ENCODE measurements at regions of chr11 and their contacts with region 1.

Region 1: DNA sequence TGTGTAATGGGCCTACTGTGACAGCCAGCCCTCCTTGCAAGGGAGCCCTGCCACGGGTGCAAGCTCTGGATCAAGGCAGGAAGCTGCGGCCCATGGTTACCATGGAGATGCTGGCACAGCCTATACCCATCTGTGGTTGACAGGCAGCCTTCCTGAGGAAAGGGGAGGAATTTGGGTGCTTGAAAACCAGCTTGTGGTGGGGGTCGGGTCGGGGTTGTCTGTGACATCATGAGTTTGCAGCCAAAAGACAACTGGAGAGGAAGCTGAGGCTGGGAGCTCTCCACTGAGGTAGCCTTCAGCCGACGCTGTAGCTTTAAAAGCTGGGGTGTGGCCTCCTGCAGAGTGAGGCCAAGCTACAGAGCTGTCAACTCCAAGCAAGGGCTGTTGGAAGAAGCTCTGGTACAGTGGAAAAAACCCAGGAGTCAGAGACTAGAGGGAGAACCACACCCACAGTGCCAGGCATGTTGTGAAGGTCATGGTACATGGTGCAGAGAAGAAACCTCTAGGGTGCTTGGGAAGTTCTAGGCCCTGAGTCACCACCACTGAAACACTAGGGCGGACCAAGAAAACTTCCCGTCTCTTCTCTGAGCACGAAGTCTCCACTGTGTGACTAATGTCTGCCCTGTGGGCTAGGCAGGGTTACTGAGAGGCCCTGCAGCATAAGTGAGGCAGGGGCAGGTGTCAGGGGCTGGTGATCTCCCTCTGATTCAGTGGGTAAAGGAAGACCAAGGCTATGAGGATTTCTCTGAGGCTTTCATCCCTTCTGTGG is 10.8 kb upstream of the LDHA start:
- DNase-seq: peak; percentile 42 to 83
- ATAC-seq: peak; percentile 74 to 90 (median 86)
- H3K4me3 ChIP-seq: no peak overlapping the region
- H3K4me3 Mint-ChIP-seq: peak overlapping the region; percentile 73
- H3K27ac ChIP-seq: peak overlapping the region; percentile 87
- H3K27ac Mint-ChIP-seq: peak overlapping the region; percentile 94 to 97
- H3K4me1 ChIP-seq: peaks cover 28% of the 10 kb centered on the region
- H3K4me1 Mint-ChIP-seq: peaks cover 17 to 27% of the 10 kb centered on the region in 2 donors
- H3K27me3 ChIP-seq: no peaks in the 10 kb centered on the region
- H3K27me3 Mint-ChIP-seq: no peaks in the 10 kb centered on the region
- CTCF ChIP-seq: no peak

Region 2: DNA sequence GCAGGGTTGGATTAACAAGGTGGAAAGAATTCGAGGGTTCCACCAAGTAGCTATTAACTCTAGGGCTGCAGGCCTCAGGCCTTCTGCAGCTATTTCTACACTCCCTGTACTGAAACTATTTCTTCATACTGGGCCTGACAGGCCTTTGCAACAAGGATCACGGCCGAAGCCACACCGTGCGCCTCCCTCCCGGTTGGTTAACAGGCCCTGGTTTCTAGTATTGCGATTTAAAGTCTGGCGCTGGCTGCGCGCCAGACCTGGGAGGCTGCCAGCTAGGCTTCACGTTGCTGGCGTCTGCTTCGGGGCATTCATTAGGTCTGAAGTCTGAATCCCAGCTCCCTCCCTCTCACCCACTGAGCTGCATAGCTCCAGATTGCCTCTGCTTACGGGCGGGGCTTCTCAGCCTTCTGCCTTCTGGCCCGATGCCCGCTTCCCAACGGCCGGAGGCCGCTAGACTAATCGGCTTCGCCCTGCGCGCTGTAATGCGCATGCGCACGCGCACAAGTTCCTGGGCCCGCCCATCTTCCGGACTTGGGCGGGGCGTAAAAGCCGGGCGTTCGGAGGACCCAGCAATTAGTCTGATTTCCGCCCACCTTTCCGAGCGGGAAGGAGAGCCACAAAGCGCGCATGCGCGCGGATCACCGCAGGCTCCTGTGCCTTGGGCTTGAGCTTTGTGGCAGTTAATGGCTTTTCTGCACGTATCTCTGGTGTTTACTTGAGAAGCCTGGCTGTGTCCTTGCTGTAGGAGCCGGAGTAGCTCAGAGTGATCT is 12.3 kb after region 1 on chr11:
- intact Hi-C with region 1: loop called (anchors 1 kb)
- DNase-seq: peak; percentile 95 to 98
- ATAC-seq: peak; percentile 71 to 84 (median 71)
- H3K4me3 ChIP-seq: peak overlapping the region; percentile 83
- H3K4me3 Mint-ChIP-seq: peak overlapping the region; percentile 98
- H3K27ac ChIP-seq: peak overlapping the region; percentile 78
- H3K27ac Mint-ChIP-seq: peak overlapping the region; percentile 96
- H3K4me1 ChIP-seq: peaks cover 24% of the 10 kb centered on the region
- H3K4me1 Mint-ChIP-seq: peaks cover 32 to 57% of the 10 kb centered on the region in 2 donors
- H3K27me3 ChIP-seq: no peaks in the 10 kb centered on the region
- H3K27me3 Mint-ChIP-seq: no peaks in the 10 kb centered on the region
- CTCF ChIP-seq: no peak

Measured in natural killer cell (primary cell).